HEK293 (cell line): ENCODE measurements at regions of chr20 and their contacts with region 1.

Region 1: DNA sequence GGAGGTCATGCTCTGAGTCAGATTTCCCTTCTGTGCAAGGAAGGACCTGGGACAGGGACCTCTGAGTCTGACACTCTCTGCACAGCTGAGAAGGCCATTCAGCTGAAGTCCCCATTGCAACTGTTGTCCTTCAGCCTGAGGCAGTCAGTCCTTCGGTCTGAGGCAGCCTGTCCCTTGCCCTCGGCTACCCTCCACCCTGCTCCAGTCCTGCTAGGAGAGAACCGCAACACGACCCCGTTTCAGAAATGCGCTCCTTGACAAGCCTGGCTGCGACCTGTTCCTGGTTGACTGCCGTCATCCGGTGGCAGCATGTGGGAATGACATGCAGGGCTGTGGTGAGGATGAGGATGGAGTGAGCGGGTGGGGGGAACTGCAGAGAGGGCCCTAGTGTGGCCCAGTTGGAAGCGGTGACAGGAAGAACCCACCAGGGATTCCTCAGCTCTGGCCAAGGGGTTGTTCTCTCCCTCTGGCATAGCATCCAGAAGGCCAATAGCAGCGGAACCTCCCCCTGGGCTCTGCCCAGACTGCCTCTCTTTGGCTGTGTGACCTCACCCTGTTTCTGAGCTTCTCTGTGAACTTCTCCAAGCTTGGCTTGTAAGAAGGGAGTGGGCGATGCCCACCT is 40.3 kb upstream of the ANGPT4 start:
- H3K4me3 ChIP-seq: no peak overlapping the region
- H3K27ac ChIP-seq: no peak overlapping the region
- H3K4me1 ChIP-seq: no peaks in the 10 kb centered on the region
- CTCF ChIP-seq: peak; percentile 87

Region 2: GRCh38 chr20:478949-479429 is 477.5 kb before region 1 on chr20:
- CTCF ChIA-PET with region 1: no interaction called
- POLR2A ChIA-PET with region 1: no interaction called
- H3K4me3 ChIP-seq: no peak overlapping the region
- H3K27ac ChIP-seq: no peak overlapping the region
- H3K4me1 ChIP-seq: no peaks in the 10 kb centered on the region
- CTCF ChIP-seq: no peak

Region 3: DNA sequence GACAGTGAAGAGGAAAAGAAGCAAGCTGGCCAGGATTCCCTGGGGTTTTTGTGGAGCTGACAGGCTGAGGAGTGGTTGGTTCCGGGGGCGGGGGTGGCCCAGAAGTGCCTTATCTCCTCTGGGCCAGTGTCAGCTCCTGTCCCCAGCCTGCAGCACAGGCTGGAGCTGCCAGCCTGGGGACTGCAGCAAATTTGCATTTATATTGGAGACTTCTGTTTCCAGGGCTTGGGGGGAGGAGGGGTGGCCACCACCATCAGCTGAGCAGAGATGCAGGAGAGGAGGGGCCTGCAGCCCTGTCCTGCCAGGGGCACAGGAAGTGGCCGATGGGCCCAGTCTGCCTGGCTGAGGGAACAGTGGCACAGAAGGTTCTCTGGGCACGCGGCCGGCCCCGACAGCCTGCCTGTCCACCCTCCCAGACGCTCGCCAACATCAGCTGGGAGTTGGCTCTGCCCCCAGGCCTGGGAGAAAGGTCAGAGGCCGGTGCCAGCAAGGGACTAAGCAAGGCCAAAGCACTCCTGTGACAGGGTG is 256.6 kb before region 1 on chr20:
- CTCF ChIA-PET with region 1: no interaction called
- POLR2A ChIA-PET with region 1: no interaction called
- H3K4me3 ChIP-seq: no peak overlapping the region
- H3K27ac ChIP-seq: no peak overlapping the region
- H3K4me1 ChIP-seq: no peaks in the 10 kb centered on the region
- CTCF ChIP-seq: no peak

Region 4: DNA sequence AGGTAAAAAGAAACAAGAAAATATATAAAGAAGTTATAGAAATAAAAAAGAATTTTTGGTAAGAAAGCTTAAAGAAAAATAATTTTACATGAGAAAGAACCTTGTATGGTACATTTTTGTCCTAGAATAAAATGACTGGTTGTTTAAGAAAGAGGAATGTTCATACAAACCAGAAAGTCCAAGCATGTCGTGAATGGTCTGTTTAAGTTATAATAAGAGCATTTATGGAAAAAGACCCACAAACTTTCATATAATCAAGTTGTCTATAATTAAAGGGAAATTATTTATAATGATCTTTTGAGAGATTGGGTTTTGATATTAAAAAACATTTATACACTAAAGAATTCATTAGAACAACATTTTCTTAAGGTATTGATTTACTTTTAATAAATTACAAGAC is 150.7 kb before region 1 on chr20:
- CTCF ChIA-PET with region 1: interaction called, 19 read pairs
- POLR2A ChIA-PET with region 1: no interaction called
- H3K4me3 ChIP-seq: no peak overlapping the region
- H3K27ac ChIP-seq: no peak overlapping the region
- H3K4me1 ChIP-seq: no peaks in the 10 kb centered on the region
- CTCF ChIP-seq: no peak

Region 5: GRCh38 chr20:815914-816606 is 140.4 kb before region 1 on chr20:
- CTCF ChIA-PET with region 1: interaction called, 178 read pairs
- POLR2A ChIA-PET with region 1: no interaction called
- H3K4me3 ChIP-seq: no peak overlapping the region
- H3K27ac ChIP-seq: no peak overlapping the region
- H3K4me1 ChIP-seq: no peaks in the 10 kb centered on the region
- CTCF ChIP-seq: peak; percentile 86

Region 6: DNA sequence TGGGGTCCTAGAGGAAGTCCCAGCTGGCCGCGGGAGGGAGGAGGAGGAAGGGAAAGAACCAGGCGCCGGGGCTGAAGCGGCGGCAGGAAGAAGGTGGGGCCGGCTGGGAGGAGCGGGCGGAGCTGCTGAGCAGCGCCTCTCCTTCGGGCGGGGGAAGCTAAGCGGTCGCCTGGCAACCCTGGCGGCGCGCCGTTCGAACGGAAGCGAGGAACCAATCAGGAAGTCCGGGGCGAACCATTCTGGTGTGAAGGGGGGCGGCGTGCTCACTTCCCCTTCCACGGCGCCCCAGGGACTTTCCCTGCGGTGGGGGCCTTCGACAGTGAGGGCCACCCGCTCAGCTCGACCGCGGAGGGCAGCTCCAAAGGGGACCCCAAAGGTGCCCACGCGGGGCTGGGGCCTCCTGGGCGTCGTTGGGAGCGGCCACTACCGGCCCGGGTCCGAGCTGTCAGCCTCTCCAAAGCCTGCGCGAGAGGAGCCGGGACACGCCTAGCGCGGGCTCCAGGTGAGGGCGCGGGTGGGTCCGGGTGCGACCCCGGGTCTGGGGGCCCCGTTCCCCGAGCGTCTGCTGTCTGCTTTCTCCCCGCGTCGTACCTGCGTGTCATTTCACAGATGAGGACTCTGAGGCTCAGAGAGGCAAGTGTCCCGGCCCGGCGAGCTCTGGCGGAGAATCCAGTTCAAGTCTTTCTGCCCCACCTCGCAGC is 122.8 kb before region 1 on chr20 and contains the start of gene FAM110A:
- CTCF ChIA-PET with region 1: interaction called, 21 read pairs
- POLR2A ChIA-PET with region 1: no interaction called
- H3K4me3 ChIP-seq: peak within 1 kb of the TSS; percentile 76
- H3K27ac ChIP-seq: peak within 1 kb of the TSS; percentile 68; the same call in 1 of the 2 replicates
- H3K4me1 ChIP-seq: peaks cover 3% of the 10 kb centered on the region; the same call in 1 of the 2 replicates
- CTCF ChIP-seq: peak; percentile 68

Region 7: DNA sequence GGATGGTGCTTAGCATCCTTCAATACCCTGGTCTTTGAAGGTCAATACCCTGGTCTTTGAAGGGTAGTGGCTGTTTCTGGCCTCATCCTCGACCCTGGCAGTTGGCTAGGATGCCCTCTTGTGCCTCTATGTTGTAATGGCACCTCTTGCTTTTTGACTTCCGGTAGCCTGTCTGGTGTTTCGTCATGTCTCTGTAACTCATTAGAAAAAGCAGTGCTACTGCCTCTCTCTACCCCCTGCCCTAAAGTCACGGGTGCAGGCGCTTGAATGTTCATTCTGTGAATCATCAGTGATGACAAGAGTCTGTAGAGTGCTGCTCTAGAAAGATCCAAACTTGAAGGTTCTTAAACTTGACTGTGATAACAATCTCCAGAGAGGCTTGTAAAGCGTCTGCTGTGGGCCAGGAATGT is 17.3 kb after region 1 on chr20:
- CTCF ChIA-PET with region 1: interaction called, 99 read pairs
- POLR2A ChIA-PET with region 1: no interaction called
- H3K4me3 ChIP-seq: no peak overlapping the region
- H3K27ac ChIP-seq: no peak overlapping the region
- H3K4me1 ChIP-seq: no peaks in the 10 kb centered on the region; the same call in 1 of the 2 replicates
- CTCF ChIP-seq: 0 out of 2 replicates have a peak, but pooled peaks have one; percentile 24

Region 8: DNA sequence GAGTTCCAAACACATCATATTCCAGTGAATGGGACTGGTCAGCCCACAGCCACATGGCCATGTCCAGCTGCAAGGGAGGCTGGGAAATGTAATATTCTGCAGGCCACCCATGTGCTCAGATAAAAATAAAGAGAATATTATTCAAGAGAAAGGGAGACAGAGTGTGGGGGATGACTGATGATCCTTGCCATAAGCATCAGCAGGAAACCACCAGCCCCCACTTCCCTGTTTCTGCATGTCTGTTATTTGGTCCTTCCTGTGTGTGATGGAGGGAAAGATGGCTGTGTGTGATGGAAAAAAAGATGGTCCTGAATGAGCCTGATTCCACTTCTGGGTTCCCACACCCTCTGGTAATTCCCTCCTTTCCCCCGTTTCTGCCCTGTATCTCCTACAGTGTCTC is 58.7 kb after region 1 on chr20:
- CTCF ChIA-PET with region 1: no interaction called
- POLR2A ChIA-PET with region 1: no interaction called
- H3K4me3 ChIP-seq: no peak overlapping the region
- H3K27ac ChIP-seq: no peak overlapping the region
- H3K4me1 ChIP-seq: no peaks in the 10 kb centered on the region
- CTCF ChIP-seq: no peak

Region 9: DNA sequence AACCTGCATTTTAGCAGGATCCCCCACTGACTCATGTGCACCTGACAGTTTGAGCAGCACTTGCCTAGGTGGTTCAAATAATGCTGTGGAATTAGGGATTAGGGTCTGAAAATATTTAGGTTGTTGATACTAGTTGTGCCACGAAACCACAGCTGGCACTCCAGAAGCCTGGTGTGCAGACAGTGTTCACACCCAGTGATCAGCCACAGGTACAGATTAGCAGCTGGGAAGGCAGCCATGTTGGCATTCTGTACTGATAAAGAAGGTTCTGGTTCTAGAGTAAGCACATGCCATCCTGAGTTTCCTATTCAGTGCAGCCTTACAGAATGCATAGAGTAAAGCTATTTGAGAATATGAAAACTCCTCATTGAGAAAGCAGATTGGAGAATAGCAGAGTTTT is 198.2 kb after region 1 on chr20:
- CTCF ChIA-PET with region 1: no interaction called
- POLR2A ChIA-PET with region 1: no interaction called
- H3K4me3 ChIP-seq: no peak overlapping the region
- H3K27ac ChIP-seq: no peak overlapping the region
- H3K4me1 ChIP-seq: no peaks in the 10 kb centered on the region
- CTCF ChIP-seq: no peak

Region 10: GRCh38 chr20:1212607-1213396 is 256.4 kb after region 1 on chr20:
- CTCF ChIA-PET with region 1: interaction called, 18 read pairs
- POLR2A ChIA-PET with region 1: no interaction called
- H3K4me3 ChIP-seq: no peak overlapping the region
- H3K27ac ChIP-seq: no peak overlapping the region
- H3K4me1 ChIP-seq: no peaks in the 10 kb centered on the region
- CTCF ChIP-seq: peak; percentile 69